ENCODE measurements at regions of chr11 and their contacts with region 1.

Region 1: GRCh38 chr11:101305496-101305895 is 175.9 kb upstream of the PGR start:
- DNase-seq: no peak
- ATAC-seq: no peak
- H3K4me3 ChIP-seq: no peak overlapping the region
- H3K27ac ChIP-seq: no peak overlapping the region
- H3K4me1 ChIP-seq: no peaks in the 10 kb centered on the region
- H3K27me3 ChIP-seq: no peaks in the 10 kb centered on the region
- CTCF ChIP-seq: no peak
- POLR2A ChIP-seq: no peak
- RAD21 ChIP-seq: no peak

Region 2: DNA sequence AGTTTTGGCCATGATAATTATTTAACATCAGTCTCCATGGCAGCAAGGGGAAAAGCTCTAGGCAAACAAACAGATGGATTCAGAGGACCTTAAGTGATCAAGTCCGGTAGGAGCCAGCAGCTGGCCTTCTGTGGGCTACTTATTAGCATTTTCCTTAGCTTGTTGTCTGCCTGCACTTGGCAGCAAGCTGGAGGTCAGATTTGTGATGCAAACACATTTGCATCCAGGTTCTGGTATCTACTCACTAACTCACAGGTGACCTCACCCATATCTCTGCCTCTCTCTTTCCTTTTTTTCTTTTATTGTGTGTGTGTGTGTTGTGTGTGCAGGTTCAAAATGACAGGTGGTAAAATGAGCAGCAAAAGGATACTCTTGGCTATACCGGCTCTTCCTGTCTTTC is 586.1 kb before region 1 on chr11:
- CTCF ChIA-PET with region 1: no interaction called
- POLR2A ChIA-PET with region 1: no interaction called
- dilution Hi-C with region 1: no loop called
- in situ Hi-C with region 1: no loop called
- intact Hi-C with region 1: no loop called
- DNase-seq: peak; percentile 42
- ATAC-seq: peak; percentile 27; the same call in 1 of the 2 replicates
- H3K4me3 ChIP-seq: no peak overlapping the region
- H3K27ac ChIP-seq: no peak overlapping the region
- H3K4me1 ChIP-seq: peaks cover 4% of the 10 kb centered on the region; the same call in 1 of the 2 replicates
- H3K27me3 ChIP-seq: no peaks in the 10 kb centered on the region
- CTCF ChIP-seq: no peak
- POLR2A ChIP-seq: no peak
- RAD21 ChIP-seq: no peak

Region 3: DNA sequence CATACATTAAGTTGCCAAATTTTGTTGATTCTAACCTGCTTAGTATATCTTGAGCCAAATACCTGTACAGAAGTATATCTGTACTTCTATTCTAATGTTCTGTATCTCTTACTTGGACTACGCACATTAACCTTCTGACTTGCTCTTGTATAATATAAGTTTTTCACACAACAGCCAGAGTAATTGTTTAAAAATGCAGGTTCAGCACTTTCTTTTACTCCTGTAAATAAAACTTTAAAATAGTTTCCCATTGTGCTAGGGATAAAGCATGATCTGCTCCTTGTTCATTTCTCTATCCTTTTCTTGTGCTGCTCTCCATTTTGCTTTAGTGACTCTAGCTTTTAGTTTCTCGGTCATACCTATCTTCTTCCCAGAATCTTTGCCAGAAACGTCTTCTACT is 1852.0 kb after region 1 on chr11:
- CTCF ChIA-PET with region 1: no interaction called
- POLR2A ChIA-PET with region 1: interaction called, 11 read pairs
- dilution Hi-C with region 1: no loop called
- in situ Hi-C with region 1: no loop called
- intact Hi-C with region 1: no loop called
- DNase-seq: no peak
- ATAC-seq: no peak
- H3K4me3 ChIP-seq: no peak overlapping the region
- H3K27ac ChIP-seq: no peak overlapping the region
- H3K4me1 ChIP-seq: no peaks in the 10 kb centered on the region
- H3K27me3 ChIP-seq: no peaks in the 10 kb centered on the region
- CTCF ChIP-seq: no peak
- POLR2A ChIP-seq: no peak
- RAD21 ChIP-seq: no peak

Measured in IMR-90 (cell line).